ENCODE measurements at regions of chr5 and their contacts with region 1.

Region 1: DNA sequence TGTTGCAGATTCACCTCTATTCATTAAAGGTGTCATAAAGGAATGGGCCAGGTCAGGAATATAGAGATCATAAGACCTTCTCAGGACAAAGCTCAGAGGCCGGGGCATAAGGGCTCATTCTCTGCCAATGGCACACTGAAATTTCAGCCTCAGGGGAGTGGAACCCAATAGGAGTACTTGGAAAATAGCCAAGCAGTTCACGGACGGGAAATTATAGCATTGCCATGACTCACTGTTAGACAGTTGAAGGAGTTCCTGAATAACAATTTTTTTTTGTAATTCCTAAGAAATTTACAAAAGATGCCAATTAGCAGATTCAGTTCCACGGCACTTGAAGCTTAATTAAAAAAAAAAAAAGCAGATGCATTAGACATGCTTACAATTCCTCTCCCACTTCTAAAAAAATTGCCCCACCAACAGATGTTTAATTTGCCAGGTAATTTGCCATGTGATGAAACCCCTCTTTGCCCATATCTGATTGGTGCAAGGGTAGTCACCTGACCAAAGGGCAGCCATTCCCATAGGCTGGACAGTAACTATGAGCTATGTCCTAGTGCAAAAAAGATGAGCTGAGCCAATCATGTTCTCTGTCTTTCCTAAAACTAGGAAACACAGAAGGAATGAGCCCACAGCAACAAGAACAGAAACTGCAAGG is 58.6 kb downstream of the PTCD2 start:
- DNase-seq: peak; percentile 83
- H3K4me3 ChIP-seq: no peak overlapping the region
- H3K27ac ChIP-seq: peak overlapping the region; percentile 58
- H3K4me1 ChIP-seq: peaks cover 40% of the 10 kb centered on the region
- H3K27me3 ChIP-seq: no peaks in the 10 kb centered on the region
- CTCF ChIP-seq: no peak

Region 2: GRCh38 chr5:72847989-72848473 is 469.3 kb after region 1 on chr5:
- CTCF ChIA-PET with region 1: no interaction called
- dilution Hi-C with region 1: no loop called
- in situ Hi-C with region 1: loop called in 1 of 2 experiments (anchors 10 kb)
- intact Hi-C with region 1: no loop called
- DNase-seq: peak; percentile 90
- H3K4me3 ChIP-seq: peak overlapping the region; percentile 88 to 99 (median 94)
- H3K27ac ChIP-seq: peak overlapping the region; percentile 82
- H3K4me1 ChIP-seq: peaks cover 24% of the 10 kb centered on the region
- H3K27me3 ChIP-seq: no peaks in the 10 kb centered on the region
- CTCF ChIP-seq: no peak

Measured in mammary epithelial cell (primary cell).